ENCODE measurements at regions of chr1 and their contacts with region 1.

Region 1: DNA sequence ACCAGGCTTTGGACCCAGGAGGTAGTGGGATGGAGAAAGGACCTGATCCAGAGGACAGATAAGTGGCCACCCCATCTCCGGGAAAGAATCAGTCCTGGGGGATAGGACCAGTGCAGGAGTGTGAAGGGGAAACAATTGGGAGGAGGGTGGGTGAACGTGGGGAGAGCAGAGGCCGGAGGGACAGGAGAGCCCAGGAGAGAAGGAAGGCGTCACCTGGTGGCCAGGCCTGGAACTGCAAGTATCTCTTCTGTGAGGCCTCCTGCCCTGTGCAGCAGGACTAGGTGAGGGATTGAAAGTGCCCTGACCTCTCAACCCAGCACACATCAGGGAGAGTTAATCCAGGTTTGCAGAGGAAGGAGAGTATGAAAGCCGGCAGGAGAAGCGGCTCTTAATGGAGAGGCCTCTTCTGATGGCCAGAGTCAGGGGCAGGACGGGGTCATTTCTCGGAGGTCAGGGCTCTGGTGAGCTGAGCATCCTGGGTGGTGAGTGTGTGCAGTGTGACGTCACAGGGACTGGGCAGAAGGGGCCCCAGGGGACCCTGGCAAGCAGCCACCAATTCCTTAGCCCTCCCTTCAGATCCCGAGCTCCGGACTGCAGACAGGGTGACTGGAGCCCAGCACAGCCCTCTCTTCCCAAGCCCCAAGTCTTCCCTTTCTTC is 9.2 kb upstream of the LAD1 start:
- DNase-seq: peak; percentile 80 to 82
- ATAC-seq: peak; percentile 73 to 90 (median 86)
- H3K4me3 ChIP-seq: no peak overlapping the region
- H3K27ac ChIP-seq: no peak overlapping the region
- H3K4me1 ChIP-seq: peaks cover 0 to 23% (median 3%) of the 10 kb centered on the region in 9 donors
- H3K27me3 ChIP-seq: no peaks in the 10 kb centered on the region
- CTCF ChIP-seq: peak; percentile 89 to 97 (median 94)

Region 2: GRCh38 chr1:200819726-200820125 is 588.6 kb before region 1 on chr1:
- intact Hi-C with region 1: no loop called
- DNase-seq: no peak
- ATAC-seq: no peak
- H3K4me3 ChIP-seq: no peak overlapping the region
- H3K27ac ChIP-seq: no peak overlapping the region
- H3K4me1 ChIP-seq: peaks cover 0 to 5% (median 0%) of the 10 kb centered on the region in 9 donors
- H3K27me3 ChIP-seq: no peaks in the 10 kb centered on the region
- CTCF ChIP-seq: no peak

Region 3: GRCh38 chr1:201254625-201255506 is 153.4 kb before region 1 on chr1:
- intact Hi-C with region 1: loop called in 8 of 10 experiments (anchors 2 to 5 kb)
- DNase-seq: peak; percentile 52 to 70
- ATAC-seq: peak; percentile 64 to 85 (median 78)
- H3K4me3 ChIP-seq: no peak overlapping the region
- H3K27ac ChIP-seq: no peak overlapping the region
- H3K4me1 ChIP-seq: peaks cover 1 to 7% (median 5%) of the 10 kb centered on the region in 9 donors
- H3K27me3 ChIP-seq: peaks cover 0 to 10% (median 6%) of the 10 kb centered on the region in 7 donors
- CTCF ChIP-seq: peak; percentile 87 to 99 (median 95)

Region 4: GRCh38 chr1:201348211-201348566 is 60.1 kb before region 1 on chr1:
- intact Hi-C with region 1: loop called in 7 of 10 experiments (anchors 2 to 10 kb)
- DNase-seq: no peak
- ATAC-seq: peak in 7 of 8 donors; percentile 5 to 59 (median 48)
- H3K4me3 ChIP-seq: no peak overlapping the region
- H3K27ac ChIP-seq: no peak overlapping the region
- H3K4me1 ChIP-seq: peaks cover 0 to 12% (median 3%) of the 10 kb centered on the region in 9 donors
- H3K27me3 ChIP-seq: peaks cover 0 to 8% (median 0%) of the 10 kb centered on the region in 7 donors
- CTCF ChIP-seq: peak; percentile 33 to 61 (median 50)

Region 5: DNA sequence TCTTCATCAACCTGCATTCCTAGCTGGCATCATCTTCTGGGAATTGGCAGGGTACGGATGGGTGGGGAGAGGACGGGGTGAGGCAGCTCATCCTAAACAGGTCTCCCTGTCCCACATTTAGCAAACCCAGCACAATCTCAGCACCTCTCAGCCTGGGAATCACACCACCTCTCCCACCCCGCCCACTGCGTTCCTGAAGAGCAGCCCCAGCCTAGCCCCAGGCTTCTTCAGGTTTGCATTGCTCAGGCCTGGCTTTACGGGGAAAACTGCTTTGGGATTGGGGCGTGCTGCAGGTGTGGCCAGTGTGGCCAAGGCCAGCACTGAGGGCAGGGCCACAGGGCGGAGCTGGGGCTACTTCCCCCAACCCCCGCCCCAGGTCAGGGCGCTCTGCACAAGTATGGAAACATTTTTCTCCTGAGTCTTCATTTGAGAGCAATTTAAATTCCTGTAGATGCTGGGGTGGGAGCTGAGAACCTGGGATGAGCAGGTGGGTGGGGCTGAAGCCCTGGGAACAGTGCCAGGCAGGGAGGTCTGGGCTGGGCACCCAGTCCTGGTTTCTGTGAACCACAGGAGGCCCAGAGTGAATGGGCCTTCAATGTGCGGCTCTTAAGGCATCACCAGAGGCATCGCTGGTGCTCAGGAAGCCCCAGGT is 55.0 kb before region 1 on chr1:
- intact Hi-C with region 1: loop called in 6 of 10 experiments (anchors 2 to 10 kb)
- DNase-seq: no peak
- ATAC-seq: peak in 1 of 8 donors; percentile 4
- H3K4me3 ChIP-seq: no peak overlapping the region
- H3K27ac ChIP-seq: no peak overlapping the region
- H3K4me1 ChIP-seq: peaks cover 0 to 18% (median 3%) of the 10 kb centered on the region in 9 donors
- H3K27me3 ChIP-seq: no peaks in the 10 kb centered on the region
- CTCF ChIP-seq: no peak

Region 6: GRCh38 chr1:201361652-201362504 is 46.4 kb before region 1 on chr1:
- intact Hi-C with region 1: loop called in 1 of 10 experiments (anchors 10 kb)
- DNase-seq: no peak
- ATAC-seq: peak in 5 of 8 donors; percentile 1 to 23 (median 16)
- H3K4me3 ChIP-seq: no peak overlapping the region
- H3K27ac ChIP-seq: peak overlapping the region in 2 of 10 donors; percentile 7 to 68
- H3K4me1 ChIP-seq: peaks cover 0 to 35% (median 5%) of the 10 kb centered on the region in 9 donors
- H3K27me3 ChIP-seq: no peaks in the 10 kb centered on the region
- CTCF ChIP-seq: peak; percentile 59 to 82 (median 73)

Measured in heart right ventricle (tissue), 16 donors.